ENCODE measurements at regions of chr4 and their contacts with region 1.

Region 1: DNA sequence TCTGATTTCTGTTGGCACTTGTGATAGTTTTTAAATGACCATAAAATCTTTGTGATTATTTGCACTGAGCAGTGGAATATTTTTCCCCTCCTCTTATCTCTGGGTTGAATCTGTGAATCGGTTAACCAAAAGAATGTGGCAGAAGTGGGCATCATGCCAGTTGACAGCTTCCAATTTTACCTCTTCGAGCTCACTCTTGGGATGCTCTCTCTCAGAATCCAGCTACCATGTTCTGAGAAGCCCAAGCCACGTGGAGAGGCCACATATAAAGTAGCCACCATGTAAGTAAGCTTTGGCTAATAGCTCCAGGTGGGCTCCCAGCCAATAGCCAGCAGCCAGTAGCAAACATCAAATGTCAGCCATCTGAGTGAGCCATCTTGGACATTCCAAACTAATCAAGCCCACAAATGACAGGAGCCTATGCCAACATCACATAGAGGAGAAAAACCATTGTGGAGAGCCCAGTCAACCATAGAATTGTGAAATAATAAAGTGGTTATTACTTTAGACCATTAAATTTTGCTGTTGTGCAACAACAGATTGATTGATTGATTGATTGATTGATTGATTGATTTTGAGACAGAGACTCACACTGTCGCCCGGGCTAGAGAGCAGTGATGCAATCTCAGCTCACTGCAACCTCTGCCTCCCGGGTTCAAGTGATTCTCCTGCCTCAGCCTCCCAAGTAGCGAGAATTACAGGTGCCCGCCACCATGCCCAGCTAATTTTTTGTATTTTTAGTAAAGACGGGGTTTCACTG is 12.7 kb upstream of the WDR19 start:
- DNase-seq: no peak
- ATAC-seq: no peak
- H3K4me3 Mint-ChIP-seq: no peak overlapping the region
- H3K27ac Mint-ChIP-seq: no peak overlapping the region
- H3K4me1 Mint-ChIP-seq: peaks cover 51% of the 10 kb centered on the region
- H3K27me3 Mint-ChIP-seq: no peaks in the 10 kb centered on the region
- CTCF ChIP-seq: no peak

Region 2: GRCh38 chr4:38319456-38320342 is 849.9 kb before region 1 on chr4:
- CTCF ChIA-PET with region 1: no interaction called
- POLR2A ChIA-PET with region 1: no interaction called
- intact Hi-C with region 1: loop called (anchors 10 kb)
- DNase-seq: peak; percentile 84
- ATAC-seq: peak; percentile 77
- H3K4me3 Mint-ChIP-seq: peak overlapping the region; percentile 78
- H3K27ac Mint-ChIP-seq: peak overlapping the region; percentile 88
- H3K4me1 Mint-ChIP-seq: peaks cover 28% of the 10 kb centered on the region
- H3K27me3 Mint-ChIP-seq: no peaks in the 10 kb centered on the region
- CTCF ChIP-seq: peak; percentile 72

Region 3: DNA sequence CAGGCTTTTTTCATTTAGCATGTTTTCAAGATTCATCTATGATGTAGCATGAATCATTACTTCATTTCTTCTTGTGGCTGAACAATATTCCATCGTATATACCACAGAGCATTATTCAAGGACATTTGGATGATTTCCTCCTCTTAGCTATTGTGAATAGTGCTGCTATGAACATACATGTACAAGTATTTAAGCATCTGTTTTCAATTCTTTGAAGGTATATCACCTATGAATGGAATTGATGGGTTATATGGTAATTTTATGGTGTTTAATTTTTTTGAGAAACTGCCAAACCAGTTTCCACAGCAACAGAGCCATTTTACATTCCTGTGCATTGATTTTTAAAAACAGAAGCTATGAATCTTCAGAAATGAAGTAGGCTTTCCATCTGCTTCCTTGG is 23.4 kb before region 1 on chr4:
- CTCF ChIA-PET with region 1: no interaction called
- POLR2A ChIA-PET with region 1: no interaction called
- intact Hi-C with region 1: no loop called
- DNase-seq: no peak
- ATAC-seq: no peak
- H3K4me3 Mint-ChIP-seq: no peak overlapping the region
- H3K27ac Mint-ChIP-seq: no peak overlapping the region
- H3K4me1 Mint-ChIP-seq: peaks cover 4% of the 10 kb centered on the region
- H3K27me3 Mint-ChIP-seq: no peaks in the 10 kb centered on the region
- CTCF ChIP-seq: no peak

Measured in activated B cell treated with CpG ODN at 0.5 μM for 24 hours (primary cell).